GM12878 (cell line): ENCODE measurements at regions of chr15 and their contacts with region 1.

Region 1: GRCh38 chr15:97114900-97115760 is 784.6 kb downstream of the NR2F2 start:
- DNase-seq: no peak
- ATAC-seq: peak; percentile 95
- H3K4me3 ChIP-seq: no peak overlapping the region
- H3K27ac ChIP-seq: no peak overlapping the region
- H3K4me1 ChIP-seq: no peaks in the 10 kb centered on the region
- H3K27me3 ChIP-seq: no peaks in the 10 kb centered on the region
- CTCF ChIP-seq: no peak
- EP300 ChIP-seq: peak; percentile 69 to 75; a peak in 3 of 4 replicates
- POLR2A ChIP-seq: no peak
- RAD21 ChIP-seq: no peak

Region 2: DNA sequence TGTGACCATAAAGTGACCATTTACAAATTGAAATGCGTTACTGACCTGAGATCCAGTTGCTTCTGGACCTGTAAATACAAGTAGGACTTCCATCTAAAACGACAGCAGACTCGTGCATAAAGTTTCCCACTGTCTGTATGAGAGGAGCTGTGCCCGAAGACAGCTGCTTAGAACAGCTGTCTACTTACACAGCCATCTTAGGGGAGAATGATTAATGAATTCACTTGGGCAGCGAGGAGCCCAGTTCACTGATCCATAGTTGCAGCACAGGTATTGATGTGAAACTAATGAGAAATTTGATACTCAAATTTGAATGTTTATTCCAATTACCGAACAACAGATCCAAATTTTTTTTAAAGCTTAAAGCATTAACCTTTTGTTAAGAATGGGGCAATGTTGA is 36.5 kb before region 1 on chr15:
- CTCF ChIA-PET with region 1: interaction called, 7 read pairs
- POLR2A ChIA-PET with region 1: interaction called, 4 read pairs
- RAD21 ChIA-PET with region 1: interaction called, 9 read pairs
- SMC1A ChIA-PET with region 1: interaction called, 19 read pairs
- in situ Hi-C with region 1: no loop called
- intact Hi-C with region 1: no loop called
- DNase-seq: no peak
- ATAC-seq: peak; percentile 59
- H3K4me3 ChIP-seq: no peak overlapping the region
- H3K27ac ChIP-seq: no peak overlapping the region
- H3K4me1 ChIP-seq: no peaks in the 10 kb centered on the region
- H3K27me3 ChIP-seq: no peaks in the 10 kb centered on the region
- CTCF ChIP-seq: no peak
- EP300 ChIP-seq: no peak
- POLR2A ChIP-seq: no peak
- RAD21 ChIP-seq: no peak

Region 3: DNA sequence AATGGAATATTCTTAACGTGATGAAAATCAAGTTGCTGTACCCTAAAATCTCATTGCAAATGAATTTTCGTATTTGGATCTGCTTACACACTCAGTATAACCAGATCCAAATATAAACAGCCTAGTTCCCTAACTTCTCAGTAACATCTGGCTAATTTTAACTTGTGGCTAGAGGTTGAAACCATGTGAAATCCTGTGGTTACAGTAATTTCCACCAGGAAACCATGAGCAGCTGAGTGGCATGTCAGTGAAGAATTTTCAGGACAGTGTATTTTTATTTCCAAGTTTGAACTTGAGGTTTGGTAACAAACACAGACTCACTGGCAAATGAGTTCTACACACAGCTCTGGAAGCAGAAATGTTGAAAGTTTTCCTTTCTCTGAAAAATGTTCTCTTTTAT is 30.5 kb before region 1 on chr15:
- CTCF ChIA-PET with region 1: no interaction called
- POLR2A ChIA-PET with region 1: interaction called, 3 read pairs
- RAD21 ChIA-PET with region 1: interaction called, 4 read pairs
- SMC1A ChIA-PET with region 1: interaction called, 19 read pairs
- in situ Hi-C with region 1: no loop called
- intact Hi-C with region 1: no loop called
- DNase-seq: no peak
- ATAC-seq: no peak
- H3K4me3 ChIP-seq: no peak overlapping the region
- H3K27ac ChIP-seq: no peak overlapping the region
- H3K4me1 ChIP-seq: no peaks in the 10 kb centered on the region
- H3K27me3 ChIP-seq: no peaks in the 10 kb centered on the region
- CTCF ChIP-seq: no peak
- EP300 ChIP-seq: no peak
- POLR2A ChIP-seq: no peak
- RAD21 ChIP-seq: no peak

Region 4: DNA sequence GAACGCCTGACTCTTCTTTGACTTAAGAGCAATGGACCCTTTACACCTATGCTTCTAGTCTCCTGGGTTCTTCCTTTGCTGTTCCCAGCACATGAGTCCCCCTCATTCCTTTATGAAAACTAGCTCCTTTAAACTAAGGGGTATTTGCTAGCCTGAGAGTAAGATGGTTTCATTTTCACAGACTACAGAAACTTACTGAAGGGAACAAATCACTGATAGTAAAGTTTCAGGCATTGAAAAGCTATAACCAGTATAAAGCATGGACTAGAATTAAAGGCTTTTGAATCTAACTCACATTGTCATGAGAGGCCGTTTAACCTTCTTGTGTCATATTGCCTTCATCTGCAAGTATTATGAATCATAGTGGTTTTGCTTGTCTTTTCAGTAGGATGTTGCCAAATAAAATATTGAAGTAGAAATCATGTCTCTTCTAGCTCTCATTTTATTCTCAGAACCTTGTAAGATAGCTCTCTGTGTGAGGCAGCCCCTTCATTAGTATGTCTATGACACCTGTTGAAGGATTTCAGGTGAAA is 18.8 kb before region 1 on chr15:
- CTCF ChIA-PET with region 1: interaction called, 3 read pairs
- POLR2A ChIA-PET with region 1: no interaction called
- RAD21 ChIA-PET with region 1: interaction called, 3 read pairs
- SMC1A ChIA-PET with region 1: interaction called, 13 read pairs
- in situ Hi-C with region 1: no loop called
- intact Hi-C with region 1: no loop called
- DNase-seq: no peak
- ATAC-seq: peak; percentile 54
- H3K4me3 ChIP-seq: no peak overlapping the region
- H3K27ac ChIP-seq: no peak overlapping the region
- H3K4me1 ChIP-seq: no peaks in the 10 kb centered on the region
- H3K27me3 ChIP-seq: no peaks in the 10 kb centered on the region
- CTCF ChIP-seq: no peak
- EP300 ChIP-seq: no peak
- POLR2A ChIP-seq: no peak
- RAD21 ChIP-seq: no peak

Region 5: DNA sequence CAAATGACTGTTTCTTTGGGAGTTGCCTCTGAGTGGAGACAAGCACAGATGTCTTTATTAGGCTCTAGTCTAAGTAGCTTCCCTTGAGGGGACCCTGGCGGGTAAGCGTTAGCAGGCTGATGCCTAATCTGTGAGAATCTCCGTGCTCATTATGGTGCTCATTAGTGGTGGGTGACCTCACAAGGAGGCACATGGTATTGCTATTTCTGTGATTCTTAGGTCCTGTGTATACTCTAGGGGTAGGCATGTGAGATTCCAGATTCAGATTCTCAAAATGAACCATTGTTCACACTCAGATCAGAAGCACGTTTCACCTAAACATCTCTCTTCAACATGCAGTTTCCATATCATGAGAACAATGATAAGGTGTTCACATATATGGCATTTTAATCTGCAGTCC is 25.1 kb after region 1 on chr15:
- CTCF ChIA-PET with region 1: interaction called, 3 read pairs
- POLR2A ChIA-PET with region 1: interaction called, 4 read pairs
- RAD21 ChIA-PET with region 1: interaction called, 3 read pairs
- SMC1A ChIA-PET with region 1: interaction called, 10 read pairs
- in situ Hi-C with region 1: no loop called
- intact Hi-C with region 1: no loop called
- DNase-seq: no peak
- ATAC-seq: peak; percentile 71
- H3K4me3 ChIP-seq: no peak overlapping the region
- H3K27ac ChIP-seq: no peak overlapping the region
- H3K4me1 ChIP-seq: no peaks in the 10 kb centered on the region
- H3K27me3 ChIP-seq: no peaks in the 10 kb centered on the region
- CTCF ChIP-seq: no peak; a peak in 1 of 6 replicates
- EP300 ChIP-seq: no peak; a peak in 1 of 4 replicates
- POLR2A ChIP-seq: no peak
- RAD21 ChIP-seq: no peak